ENCODE measurements at regions of chr1 and their contacts with region 1.

Region 1: DNA sequence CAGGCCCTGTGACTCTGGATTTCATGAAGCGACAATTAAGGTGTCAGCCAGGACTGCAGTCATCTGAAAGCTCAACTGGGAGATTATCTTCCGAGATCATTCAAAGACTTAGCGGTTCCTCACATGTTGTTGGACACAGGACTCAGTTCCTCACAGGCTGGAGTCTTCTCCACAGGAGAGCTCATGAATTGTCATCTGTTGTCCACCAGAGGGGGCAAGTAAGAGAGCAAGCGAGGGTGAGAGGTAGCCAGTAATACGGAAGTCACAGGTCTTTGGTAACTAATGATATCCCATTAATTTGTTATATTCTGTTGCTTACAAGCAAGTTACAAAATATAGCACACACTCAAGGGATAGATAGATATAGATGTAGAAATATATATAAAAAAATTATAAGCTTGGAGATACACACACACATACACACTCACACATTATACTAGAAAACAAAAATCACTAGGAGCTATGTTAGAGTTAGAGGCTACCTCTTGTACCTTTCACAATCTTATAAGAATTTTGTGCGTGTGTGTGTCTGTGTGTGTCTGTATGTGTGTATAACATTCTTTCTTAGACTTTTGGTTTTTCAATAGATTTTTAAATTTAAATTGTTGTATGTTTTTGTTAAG is 1695.3 kb downstream of the BRINP3 start:
- DNase-seq: peak; percentile 58
- H3K4me3 Mint-ChIP-seq: no peak overlapping the region
- H3K27ac Mint-ChIP-seq: no peak overlapping the region
- H3K4me1 Mint-ChIP-seq: no peaks in the 10 kb centered on the region
- H3K27me3 Mint-ChIP-seq: no peaks in the 10 kb centered on the region
- CTCF ChIP-seq: peak; percentile 86

Region 2: GRCh38 chr1:187755536-187755935 is 1026.8 kb before region 1 on chr1:
- CTCF ChIA-PET with region 1: no interaction called
- intact Hi-C with region 1: no loop called
- DNase-seq: no peak
- H3K4me3 Mint-ChIP-seq: no peak overlapping the region
- H3K27ac Mint-ChIP-seq: no peak overlapping the region
- H3K4me1 Mint-ChIP-seq: no peaks in the 10 kb centered on the region
- H3K27me3 Mint-ChIP-seq: no peaks in the 10 kb centered on the region
- CTCF ChIP-seq: no peak

Region 3: GRCh38 chr1:188489713-188490112 is 292.6 kb before region 1 on chr1:
- CTCF ChIA-PET with region 1: no interaction called
- intact Hi-C with region 1: loop called (anchors 5 kb)
- DNase-seq: no peak
- H3K4me3 Mint-ChIP-seq: no peak overlapping the region
- H3K27ac Mint-ChIP-seq: peak overlapping the region; percentile 7
- H3K4me1 Mint-ChIP-seq: peaks cover 9% of the 10 kb centered on the region
- H3K27me3 Mint-ChIP-seq: no peaks in the 10 kb centered on the region
- CTCF ChIP-seq: no peak

Region 4: GRCh38 chr1:188937965-188938551 is 155.7 kb after region 1 on chr1:
- CTCF ChIA-PET with region 1: interaction called, 9 read pairs
- intact Hi-C with region 1: loop called (anchors 1 kb)
- DNase-seq: peak; percentile 30
- H3K4me3 Mint-ChIP-seq: no peak overlapping the region
- H3K27ac Mint-ChIP-seq: no peak overlapping the region
- H3K4me1 Mint-ChIP-seq: no peaks in the 10 kb centered on the region
- H3K27me3 Mint-ChIP-seq: no peaks in the 10 kb centered on the region
- CTCF ChIP-seq: peak; percentile 65

Region 5: DNA sequence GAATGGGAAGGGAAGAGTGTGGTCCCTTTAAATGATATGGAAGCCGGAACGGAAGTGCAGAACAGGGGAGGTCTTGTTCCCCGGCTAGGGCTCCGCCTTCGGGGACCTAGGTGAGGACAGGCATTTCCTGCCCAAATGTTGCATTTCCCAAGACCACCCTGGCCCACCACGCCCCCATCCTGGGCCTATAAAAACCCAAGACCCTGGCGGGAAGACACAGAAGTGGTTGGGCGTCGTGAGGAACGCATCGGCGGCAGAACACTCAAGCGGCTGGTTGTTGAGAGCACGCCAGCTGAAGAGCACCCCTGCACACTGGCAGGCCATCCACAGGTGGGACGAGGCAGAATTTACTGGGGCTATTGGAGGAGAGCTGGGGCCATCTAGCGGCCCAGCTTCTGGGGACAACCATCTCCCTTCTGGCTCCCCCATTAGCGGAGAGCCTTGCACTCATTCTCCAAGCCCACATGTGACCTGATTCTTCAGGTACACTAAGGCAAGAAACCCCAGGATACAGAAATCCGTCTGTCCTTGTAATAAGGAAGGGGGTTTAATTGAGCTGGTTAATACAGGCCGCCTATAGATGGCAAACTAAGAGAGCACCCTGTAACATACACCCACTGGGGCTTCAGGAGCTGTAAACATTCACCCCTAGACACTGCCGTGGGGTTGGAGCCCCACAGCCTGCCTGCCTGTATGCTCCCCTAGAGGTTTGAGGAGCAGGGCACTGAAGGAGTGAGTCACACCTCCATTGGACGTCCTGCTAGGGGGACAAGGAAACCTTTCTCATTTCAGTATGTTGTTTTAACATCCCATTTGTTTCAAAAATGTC is 367.4 kb after region 1 on chr1:
- CTCF ChIA-PET with region 1: interaction called, 21 read pairs
- intact Hi-C with region 1: loop called (anchors 1 kb)
- DNase-seq: peak; percentile 86
- H3K4me3 Mint-ChIP-seq: peak overlapping the region; percentile 88
- H3K27ac Mint-ChIP-seq: peak overlapping the region; percentile 89
- H3K4me1 Mint-ChIP-seq: peaks cover 19% of the 10 kb centered on the region
- H3K27me3 Mint-ChIP-seq: no peaks in the 10 kb centered on the region
- CTCF ChIP-seq: peak; percentile 75

Region 6: DNA sequence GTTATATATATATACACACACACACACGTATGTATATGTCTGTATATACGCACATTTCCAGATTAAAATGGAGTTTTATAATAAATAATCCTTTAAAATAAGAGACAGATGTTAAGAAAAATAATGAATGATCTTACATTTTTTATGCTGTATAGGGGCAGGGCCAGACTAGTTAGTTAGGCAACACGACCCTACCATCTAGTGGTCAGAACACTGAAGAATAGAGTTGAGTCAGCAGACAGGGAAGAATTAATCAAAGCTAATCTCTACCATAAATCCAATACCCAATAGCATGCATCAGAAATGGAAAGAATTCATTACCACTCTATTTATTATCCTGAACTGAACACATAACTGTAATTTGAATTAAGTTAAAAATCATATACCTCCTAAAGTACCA is 1538.6 kb after region 1 on chr1:
- CTCF ChIA-PET with region 1: interaction called, 3 read pairs
- intact Hi-C with region 1: loop called (anchors 2 kb)
- DNase-seq: peak; percentile 53
- H3K4me3 Mint-ChIP-seq: no peak overlapping the region
- H3K27ac Mint-ChIP-seq: no peak overlapping the region
- H3K4me1 Mint-ChIP-seq: no peaks in the 10 kb centered on the region
- H3K27me3 Mint-ChIP-seq: no peaks in the 10 kb centered on the region
- CTCF ChIP-seq: peak; percentile 46